ENCODE measurements at regions of chr14 and their contacts with region 1.

Region 1: DNA sequence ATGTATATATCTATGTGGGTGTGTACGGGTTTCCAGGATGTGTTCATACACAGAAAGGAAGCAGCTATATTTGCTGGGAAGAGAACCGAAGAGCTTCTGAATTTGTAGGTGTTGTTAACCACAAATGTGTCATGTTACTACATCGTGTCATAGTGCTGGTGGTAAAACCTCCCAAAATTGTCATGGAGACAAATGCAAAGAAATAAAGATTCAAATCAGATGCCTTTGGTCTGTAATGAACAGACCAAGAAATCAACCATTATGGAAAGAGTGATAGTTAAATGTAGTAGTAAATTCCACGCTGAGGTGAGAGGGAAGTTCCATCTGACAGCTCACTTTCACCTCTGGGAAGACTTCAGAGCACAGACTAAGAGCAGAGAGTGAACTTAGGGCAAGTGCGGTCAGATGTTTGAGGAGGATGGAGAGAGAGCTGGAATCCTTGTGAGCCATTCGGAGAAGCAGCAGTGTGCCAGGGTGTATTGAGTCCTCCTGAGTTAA is 487.5 kb downstream of the TMEM121 start:
- DNase-seq: no peak
- H3K4me3 Mint-ChIP-seq: no peak overlapping the region
- H3K27ac Mint-ChIP-seq: no peak overlapping the region
- H3K4me1 Mint-ChIP-seq: peaks cover 44% of the 10 kb centered on the region
- H3K27me3 Mint-ChIP-seq: no peaks in the 10 kb centered on the region

Region 2: GRCh38 chr14:105941226-105942166 is 72.4 kb before region 1 on chr14:
- CTCF ChIA-PET with region 1: no interaction called
- POLR2A ChIA-PET with region 1: no interaction called
- DNase-seq: no peak
- H3K4me3 Mint-ChIP-seq: no peak overlapping the region
- H3K27ac Mint-ChIP-seq: no peak overlapping the region
- H3K4me1 Mint-ChIP-seq: peaks cover 15% of the 10 kb centered on the region
- H3K27me3 Mint-ChIP-seq: peaks cover 2% of the 10 kb centered on the region

Region 3: GRCh38 chr14:106039400-106039799 is 25.5 kb after region 1 on chr14:
- CTCF ChIA-PET with region 1: interaction called, 13 read pairs
- POLR2A ChIA-PET with region 1: no interaction called
- DNase-seq: peak; percentile 65
- H3K4me3 Mint-ChIP-seq: no peak overlapping the region
- H3K27ac Mint-ChIP-seq: no peak overlapping the region
- H3K4me1 Mint-ChIP-seq: no peaks in the 10 kb centered on the region
- H3K27me3 Mint-ChIP-seq: peaks cover 9% of the 10 kb centered on the region